ENCODE measurements at regions of chr2 and their contacts with region 1.

Region 1: DNA sequence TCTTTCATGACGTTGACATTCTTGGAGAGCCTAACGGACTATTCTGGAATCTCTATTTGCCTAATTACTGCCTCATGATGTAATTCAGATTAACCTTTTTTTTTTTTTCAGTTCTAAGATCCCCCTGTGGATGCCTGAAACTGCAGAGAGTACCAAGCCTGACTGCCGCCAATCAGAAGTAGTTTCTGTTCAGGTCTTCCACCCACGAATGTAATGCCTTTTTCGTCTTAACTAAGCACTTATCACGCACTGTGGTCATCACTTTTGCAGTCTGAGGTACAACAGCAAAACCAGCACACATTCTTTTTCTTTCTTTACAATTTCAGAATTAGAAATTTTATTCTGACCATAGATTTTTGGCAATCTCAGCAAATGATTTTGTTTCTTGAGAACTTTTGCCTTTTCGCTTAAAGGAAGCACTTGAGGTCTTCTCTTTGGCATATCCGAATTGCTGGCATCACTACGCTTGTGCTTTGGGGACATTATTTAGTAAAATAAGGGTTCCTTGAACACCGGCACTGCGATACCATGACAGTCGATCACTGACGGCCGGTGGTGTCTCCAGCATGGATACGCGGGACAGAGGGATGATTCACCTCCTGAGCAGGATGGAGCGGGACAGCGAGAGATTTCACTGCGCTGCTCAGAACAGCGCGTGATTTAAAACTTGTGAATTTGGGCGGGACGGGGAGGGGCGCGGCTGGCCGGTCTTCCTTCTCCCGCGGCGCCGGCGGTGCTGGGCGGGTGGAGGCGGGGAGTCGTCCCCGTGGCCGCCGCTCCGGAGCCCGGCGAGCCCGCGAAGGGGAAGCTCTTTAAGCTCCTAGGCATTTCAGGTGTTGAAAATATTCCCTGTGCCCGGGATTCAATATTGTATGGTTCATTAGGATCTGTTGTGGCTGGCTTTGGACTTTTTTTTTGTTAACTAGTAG is 32.0 kb upstream of the GPR55 start:
- DNase-seq: no peak
- ATAC-seq: peak; percentile 73
- H3K4me3 ChIP-seq: peak overlapping the region in 2 of 3 experiments; percentile 13; a peak in 3 of 6 replicates
- H3K27ac ChIP-seq: no peak overlapping the region
- H3K4me1 ChIP-seq: 0 out of 2 replicates have a peak, but pooled peaks cover 6% of the 10 kb centered on the region
- H3K27me3 ChIP-seq: peaks cover 7 to 65% of the 10 kb centered on the region in 2 experiments; a peak in 4 of 5 replicates
- CTCF ChIP-seq: no peak
- EP300 ChIP-seq: no peak
- POLR2A ChIP-seq: no peak
- RAD21 ChIP-seq: no peak

Region 2: GRCh38 chr2:230496891-230497290 is 460.2 kb before region 1 on chr2:
- CTCF ChIA-PET with region 1: no interaction called
- POLR2A ChIA-PET with region 1: no interaction called
- in situ Hi-C with region 1: no loop called
- intact Hi-C with region 1: loop called (anchors 10 kb)
- DNase-seq: no peak
- ATAC-seq: no peak
- H3K4me3 ChIP-seq: no peak overlapping the region
- H3K27ac ChIP-seq: no peak overlapping the region
- H3K4me1 ChIP-seq: peaks cover 6% of the 10 kb centered on the region
- H3K27me3 ChIP-seq: no peaks in the 10 kb centered on the region
- CTCF ChIP-seq: no peak
- EP300 ChIP-seq: no peak
- POLR2A ChIP-seq: no peak
- RAD21 ChIP-seq: no peak

Region 3: GRCh38 chr2:230824406-230824978 is 132.6 kb before region 1 on chr2:
- CTCF ChIA-PET with region 1: no interaction called
- POLR2A ChIA-PET with region 1: no interaction called
- in situ Hi-C with region 1: no loop called
- intact Hi-C with region 1: no loop called
- DNase-seq: peak; percentile 87
- ATAC-seq: peak; percentile 91
- H3K4me3 ChIP-seq: peak overlapping the region in 2 of 3 experiments; percentile 28 to 36; a peak in 2 of 6 replicates
- H3K27ac ChIP-seq: no peak overlapping the region
- H3K4me1 ChIP-seq: no peaks in the 10 kb centered on the region
- H3K27me3 ChIP-seq: peaks cover 2 to 24% of the 10 kb centered on the region in 2 experiments; a peak in 4 of 5 replicates
- CTCF ChIP-seq: peak; percentile 89
- EP300 ChIP-seq: no peak
- POLR2A ChIP-seq: no peak
- RAD21 ChIP-seq: peak; percentile 81

Region 4: GRCh38 chr2:230974096-230974913 is 17.2 kb after region 1 on chr2:
- CTCF ChIA-PET with region 1: no interaction called
- POLR2A ChIA-PET with region 1: no interaction called
- in situ Hi-C with region 1: no loop called
- intact Hi-C with region 1: no loop called
- DNase-seq: no peak
- ATAC-seq: no peak
- H3K4me3 ChIP-seq: no peak overlapping the region
- H3K27ac ChIP-seq: no peak overlapping the region
- H3K4me1 ChIP-seq: peaks cover 8% of the 10 kb centered on the region
- H3K27me3 ChIP-seq: peaks cover 0 to 12% of the 10 kb centered on the region in 2 experiments; a peak in 1 of 5 replicates
- CTCF ChIP-seq: no peak
- EP300 ChIP-seq: no peak
- POLR2A ChIP-seq: no peak
- RAD21 ChIP-seq: no peak